Cardiac septum (tissue), 1 donor: ENCODE measurements at regions of chr11 and their contacts with region 1.

Region 1: GRCh38 chr11:62645956-62646824 is at the start of gene GANAB:
- DNase-seq: peak; percentile 100
- total RNA-seq, gene GANAB: 99.8 TPM

Region 2: GRCh38 chr11:62621567-62622470 is 24.4 kb before region 1 on chr11 and contains the start of gene B3GAT3:
- intact Hi-C with region 1: loop called (anchors 2 kb)
- DNase-seq: peak; percentile 98
- total RNA-seq, gene B3GAT3: 16.0 TPM

Region 3: DNA sequence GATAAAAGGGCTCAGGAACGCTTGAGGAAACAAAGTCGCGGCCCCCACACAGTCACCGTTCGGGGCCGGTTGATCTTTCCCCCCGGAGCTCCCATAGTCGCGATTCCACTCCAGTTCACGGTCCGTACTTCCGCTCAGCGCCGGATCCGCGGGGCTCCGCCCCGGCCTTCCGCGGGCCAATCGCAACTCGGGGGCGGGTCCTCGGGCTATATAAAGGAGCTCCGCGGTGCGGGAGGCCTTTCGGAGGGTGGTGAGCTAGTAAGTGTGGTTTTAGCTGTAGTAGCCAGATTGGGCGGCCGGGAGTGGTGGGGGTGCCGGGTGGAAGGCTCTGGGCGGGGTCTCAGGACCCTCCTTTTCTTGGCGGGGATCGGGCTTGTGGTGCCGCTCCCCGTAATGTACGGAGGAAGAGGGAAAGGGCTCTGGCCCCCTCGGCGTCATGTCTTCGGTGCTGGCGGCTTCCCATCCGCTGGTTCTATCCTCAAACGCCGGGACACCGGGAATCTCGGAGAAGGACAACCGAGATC is 18.9 kb after region 1 on chr11 and contains the starts of genes C11orf98 and CSKMT:
- intact Hi-C with region 1: loop called (anchors 2 kb)
- DNase-seq: peak; percentile 98
- total RNA-seq, gene C11orf98: 25.4 TPM
- total RNA-seq, gene CSKMT: 7.5 TPM